HepG2 (cell line): ENCODE measurements at regions of chr11 and their contacts with region 1.

Region 1: DNA sequence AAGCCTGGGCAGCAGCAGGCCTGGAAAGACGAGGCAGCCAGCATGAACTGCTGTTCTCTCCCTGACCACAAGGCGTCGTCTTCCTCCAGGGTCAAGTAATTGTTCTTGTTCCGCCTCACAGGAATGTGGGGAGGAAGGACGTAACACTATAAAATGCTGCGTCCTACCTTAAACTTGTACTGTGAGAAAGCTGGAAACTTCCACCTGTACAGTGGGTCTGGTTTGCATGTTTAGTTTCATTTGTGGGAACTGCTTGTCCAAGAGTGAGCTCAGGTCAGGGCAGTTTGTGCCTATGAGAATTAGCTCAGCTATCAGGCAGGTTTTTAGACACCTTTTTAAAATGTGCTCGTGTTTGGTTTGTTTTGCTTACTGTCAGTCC is 55.2 kb downstream of the PANX1 start:
- DNase-seq: peak; percentile 33
- ATAC-seq: peak; percentile 85
- H3K4me3 ChIP-seq: no peak overlapping the region
- H3K27ac ChIP-seq: no peak overlapping the region
- H3K4me1 ChIP-seq: peaks cover 8% of the 10 kb centered on the region; the same call in 1 of the 2 replicates
- H3K27me3 ChIP-seq: no peaks in the 10 kb centered on the region
- CTCF ChIP-seq: peak; percentile 91
- EP300 ChIP-seq: no peak
- POLR2A ChIP-seq: no peak
- RAD21 ChIP-seq: peak; percentile 66

Region 2: DNA sequence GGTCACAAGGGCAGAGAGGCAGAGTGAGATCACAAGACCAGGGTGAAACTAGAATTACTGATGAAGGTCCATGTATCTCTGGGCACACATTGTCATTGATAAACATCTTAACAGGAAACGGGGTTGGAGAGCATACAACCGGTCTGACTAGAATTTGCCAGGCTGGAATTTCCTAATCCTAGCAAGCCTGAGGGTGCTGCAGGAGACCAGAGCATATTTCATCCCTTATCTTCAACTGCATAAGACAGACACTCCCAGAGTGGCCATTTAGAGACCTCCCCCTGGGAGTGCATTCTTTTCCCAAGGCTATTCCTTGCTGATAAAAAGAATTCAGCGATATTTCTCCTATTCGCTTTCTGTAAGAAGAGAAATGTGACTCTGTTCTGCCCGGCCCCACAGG is 35.9 kb after region 1 on chr11:
- CTCF ChIA-PET with region 1: no interaction called
- POLR2A ChIA-PET with region 1: no interaction called
- in situ Hi-C with region 1: no loop called
- intact Hi-C with region 1: loop called (anchors 1 kb)
- DNase-seq: no peak
- ATAC-seq: no peak
- H3K4me3 ChIP-seq: no peak overlapping the region
- H3K27ac ChIP-seq: no peak overlapping the region
- H3K4me1 ChIP-seq: no peaks in the 10 kb centered on the region
- H3K27me3 ChIP-seq: no peaks in the 10 kb centered on the region
- CTCF ChIP-seq: no peak
- EP300 ChIP-seq: no peak
- POLR2A ChIP-seq: no peak
- RAD21 ChIP-seq: no peak

Region 3: DNA sequence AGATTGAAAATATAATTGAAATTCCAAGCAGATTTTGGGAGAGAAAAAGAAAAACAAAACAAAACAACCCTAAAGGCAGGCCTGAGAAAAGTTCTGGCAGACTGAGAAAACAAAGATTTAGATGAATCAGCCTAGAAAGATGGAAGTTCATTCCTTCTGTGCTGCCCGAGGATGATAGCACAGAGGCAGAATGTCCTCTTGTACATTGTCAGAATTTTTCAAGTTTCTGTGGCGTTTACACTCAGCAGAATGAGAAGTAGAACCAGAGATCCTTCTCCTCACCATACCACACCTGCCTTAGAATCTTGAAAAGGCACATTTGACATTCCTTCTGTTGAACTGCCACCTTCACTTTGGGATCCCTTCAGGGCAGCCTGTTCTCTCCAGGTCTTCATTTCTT is 58.0 kb after region 1 on chr11:
- CTCF ChIA-PET with region 1: no interaction called
- POLR2A ChIA-PET with region 1: no interaction called
- in situ Hi-C with region 1: no loop called
- intact Hi-C with region 1: loop called (anchors 2 kb)
- DNase-seq: no peak
- ATAC-seq: no peak
- H3K4me3 ChIP-seq: no peak overlapping the region
- H3K27ac ChIP-seq: no peak overlapping the region
- H3K4me1 ChIP-seq: no peaks in the 10 kb centered on the region
- H3K27me3 ChIP-seq: no peaks in the 10 kb centered on the region; a peak in 1 of 5 replicates
- CTCF ChIP-seq: no peak
- EP300 ChIP-seq: no peak
- POLR2A ChIP-seq: no peak
- RAD21 ChIP-seq: no peak

Region 4: GRCh38 chr11:94325681-94326080 is 141.8 kb after region 1 on chr11:
- CTCF ChIA-PET with region 1: no interaction called
- POLR2A ChIA-PET with region 1: no interaction called
- in situ Hi-C with region 1: no loop called
- intact Hi-C with region 1: loop called (anchors 5 kb)
- DNase-seq: peak; percentile 39
- ATAC-seq: peak; percentile 95
- H3K4me3 ChIP-seq: no peak overlapping the region
- H3K27ac ChIP-seq: no peak overlapping the region
- H3K4me1 ChIP-seq: no peaks in the 10 kb centered on the region
- H3K27me3 ChIP-seq: no peaks in the 10 kb centered on the region; a peak in 1 of 5 replicates
- CTCF ChIP-seq: peak; percentile 84
- EP300 ChIP-seq: no peak
- POLR2A ChIP-seq: no peak
- RAD21 ChIP-seq: peak; percentile 71